Activated naive CD4-positive, alpha-beta T cell treated with anti-CD3 and anti-CD28 coated beads for 36 hours (primary cell): ENCODE measurements at regions of chr10 and their contacts with region 1.

Region 1: DNA sequence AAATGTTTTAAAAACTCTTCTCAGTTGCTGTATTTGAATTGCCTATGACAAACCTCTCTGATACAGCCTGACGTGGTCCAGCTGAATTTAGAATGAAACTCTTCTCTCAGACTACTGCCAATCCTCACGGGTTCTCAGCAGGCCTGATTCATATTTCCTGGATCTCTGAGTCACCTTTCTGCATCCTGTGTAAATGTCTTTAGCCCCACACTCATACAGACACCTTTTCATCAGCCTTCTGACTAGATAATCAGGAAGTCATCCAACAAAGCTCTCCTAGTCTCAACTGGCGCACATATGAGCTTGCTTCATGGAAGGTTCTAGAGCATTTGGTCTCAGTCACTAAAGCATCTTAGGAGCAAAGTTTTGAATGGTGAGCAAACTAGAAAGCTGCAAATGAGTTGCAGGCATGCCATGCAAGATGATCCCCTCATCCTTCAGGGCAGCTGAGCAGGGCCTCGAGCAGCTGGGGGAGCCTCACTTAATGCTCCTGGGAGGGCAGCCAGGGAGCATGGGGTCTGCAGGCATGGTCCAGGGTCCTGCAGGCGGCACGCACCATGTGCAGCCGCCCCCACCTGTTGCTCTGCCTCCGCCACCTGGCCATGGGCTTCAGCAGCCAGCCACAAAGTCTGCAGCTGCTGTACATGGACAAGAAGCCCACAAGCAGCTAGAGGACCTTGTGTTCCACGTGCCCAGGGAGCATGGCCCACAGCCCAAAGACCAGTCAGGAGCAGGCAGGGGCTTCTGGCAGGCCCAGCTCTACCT is 182.8 kb downstream of the ARHGAP12 start:
- DNase-seq: peak; percentile 84
- H3K4me3 Mint-ChIP-seq: no peak overlapping the region
- H3K27ac Mint-ChIP-seq: peak overlapping the region; percentile 95
- H3K4me1 Mint-ChIP-seq: peaks cover 47% of the 10 kb centered on the region
- H3K27me3 Mint-ChIP-seq: no peaks in the 10 kb centered on the region

Region 2: GRCh38 chr10:31347705-31348104 is 398.1 kb before region 1 on chr10:
- CTCF ChIA-PET with region 1: no interaction called
- intact Hi-C with region 1: loop called (anchors 1 kb)
- DNase-seq: no peak
- H3K4me3 Mint-ChIP-seq: no peak overlapping the region
- H3K27ac Mint-ChIP-seq: no peak overlapping the region
- H3K4me1 Mint-ChIP-seq: peaks cover 71% of the 10 kb centered on the region
- H3K27me3 Mint-ChIP-seq: no peaks in the 10 kb centered on the region

Region 3: DNA sequence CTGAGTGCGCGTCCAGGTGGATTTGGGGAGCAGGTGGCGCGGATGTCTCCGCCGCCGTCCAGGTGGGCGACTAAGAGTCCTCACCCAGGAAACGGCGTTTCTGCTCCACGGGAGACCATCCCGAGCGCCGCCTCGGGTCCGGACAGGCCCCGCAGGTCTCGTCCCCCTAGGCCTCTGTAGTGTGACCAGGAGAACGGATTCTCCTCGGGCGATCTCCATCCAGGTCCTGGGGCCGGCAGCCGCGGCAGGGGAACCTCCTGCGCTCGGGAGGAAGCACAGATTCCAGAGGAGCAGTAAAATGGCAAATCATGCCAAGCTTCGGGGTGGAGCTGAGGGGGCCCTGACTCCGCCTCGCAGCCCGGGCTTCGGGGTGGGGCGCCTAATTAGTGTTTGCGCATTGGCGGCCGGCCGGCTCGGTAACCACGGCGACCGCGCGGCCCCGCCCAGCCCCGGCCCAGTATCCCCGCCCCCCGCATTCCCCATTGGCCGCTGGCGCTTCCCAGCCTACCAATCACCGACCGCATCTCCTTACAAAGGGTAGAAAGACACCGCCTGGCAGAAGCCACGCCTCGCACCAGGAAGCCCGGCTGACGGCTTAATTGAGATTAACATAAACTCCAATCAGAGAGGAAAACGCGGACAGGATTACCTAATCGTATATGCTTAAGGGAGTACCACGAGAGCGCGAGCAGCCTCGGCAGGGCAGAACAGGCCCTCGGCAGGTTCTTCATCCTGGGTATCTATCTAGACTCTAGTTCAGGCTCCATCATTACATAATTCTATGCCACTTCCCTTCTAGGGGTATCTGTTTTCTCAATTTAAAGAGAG is 14.2 kb after region 1 on chr10:
- CTCF ChIA-PET with region 1: interaction called, 5 read pairs
- intact Hi-C with region 1: loop called (anchors 1 kb)
- DNase-seq: peak; percentile 96
- H3K4me3 Mint-ChIP-seq: peak overlapping the region; percentile 94
- H3K27ac Mint-ChIP-seq: peak overlapping the region; percentile 95
- H3K4me1 Mint-ChIP-seq: peaks cover 18% of the 10 kb centered on the region
- H3K27me3 Mint-ChIP-seq: no peaks in the 10 kb centered on the region

Region 4: GRCh38 chr10:31770307-31770902 is 24.6 kb after region 1 on chr10:
- CTCF ChIA-PET with region 1: interaction called, 12 read pairs
- intact Hi-C with region 1: no loop called
- DNase-seq: peak; percentile 76
- H3K4me3 Mint-ChIP-seq: no peak overlapping the region
- H3K27ac Mint-ChIP-seq: no peak overlapping the region
- H3K4me1 Mint-ChIP-seq: peaks cover 5% of the 10 kb centered on the region
- H3K27me3 Mint-ChIP-seq: no peaks in the 10 kb centered on the region

Region 5: DNA sequence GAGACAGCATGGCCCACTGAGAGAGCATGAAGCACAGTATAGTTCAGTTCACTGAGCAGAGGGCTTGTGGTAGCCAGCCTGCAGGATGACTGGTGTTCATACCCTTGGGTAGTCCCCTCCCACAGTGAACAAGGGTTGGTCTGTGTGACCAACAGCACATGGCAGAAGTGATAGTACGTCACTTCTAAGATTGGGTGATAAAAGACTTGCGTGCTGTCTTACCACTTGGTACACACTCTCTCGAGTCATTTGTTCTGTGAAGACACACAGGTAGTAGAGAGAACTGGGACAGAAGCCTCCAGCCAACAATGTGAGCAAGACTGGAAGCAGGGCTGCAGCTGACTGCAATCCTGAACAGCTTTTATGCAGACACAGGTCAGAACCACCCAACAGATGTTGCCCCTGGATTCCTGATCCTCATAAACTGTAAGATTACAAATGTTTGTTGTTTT is 586.5 kb after region 1 on chr10:
- CTCF ChIA-PET with region 1: no interaction called
- intact Hi-C with region 1: loop called (anchors 1 kb)
- DNase-seq: peak; percentile 89
- H3K4me3 Mint-ChIP-seq: peak overlapping the region; percentile 55
- H3K27ac Mint-ChIP-seq: peak overlapping the region; percentile 90
- H3K4me1 Mint-ChIP-seq: peaks cover 94% of the 10 kb centered on the region
- H3K27me3 Mint-ChIP-seq: no peaks in the 10 kb centered on the region